ENCODE measurements at regions of chr14 and their contacts with region 1.

Region 1: GRCh38 chr14:24481622-24482324 is 26.3 kb downstream of the CMA1 start:
- DNase-seq: peak; percentile 70 to 89
- H3K4me3 ChIP-seq: no peak overlapping the region
- H3K27ac ChIP-seq: no peak overlapping the region
- H3K4me1 ChIP-seq: peaks cover 0 to 3% (median 0%) of the 10 kb centered on the region in 4 experiments; a peak in 1 of 7 replicates
- H3K27me3 ChIP-seq: no peaks in the 10 kb centered on the region
- CTCF ChIP-seq: peak; percentile 83 to 94 (median 88)
- EP300 ChIP-seq: no peak
- POLR2A ChIP-seq: peak in 1 of 2 experiments; percentile 33; a peak in 1 of 3 replicates
- RAD21 ChIP-seq: peak; percentile 82 to 90

Region 2: DNA sequence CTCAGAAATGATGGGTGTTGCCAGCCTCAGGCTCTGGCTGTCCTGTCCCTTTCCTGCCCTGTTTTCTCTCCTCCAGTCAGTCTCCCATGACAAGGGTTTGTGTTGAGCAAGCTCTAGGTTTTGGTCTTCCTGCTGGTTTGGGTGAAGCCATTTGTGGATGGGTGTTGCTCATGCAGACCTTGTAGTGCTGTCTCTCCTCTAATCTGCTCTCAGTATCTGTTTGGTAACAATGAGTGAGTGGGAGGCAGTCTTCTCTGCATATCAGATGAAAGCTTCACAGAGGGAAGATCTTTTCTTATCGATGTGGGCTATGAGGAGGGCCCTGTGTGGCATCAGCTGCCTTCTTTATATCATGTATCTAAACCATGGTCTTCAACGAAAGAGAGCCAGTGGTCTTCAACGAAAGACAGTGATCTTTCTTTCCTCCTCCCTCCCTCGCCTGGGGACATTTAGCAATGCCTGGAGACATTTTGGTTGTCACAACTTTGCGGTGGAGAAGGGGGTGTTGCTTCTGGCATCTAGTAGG is 22.7 kb after region 1 on chr14:
- CTCF ChIA-PET with region 1: interaction called, 10 read pairs
- POLR2A ChIA-PET with region 1: no interaction called
- DNase-seq: no peak
- H3K4me3 ChIP-seq: no peak overlapping the region
- H3K27ac ChIP-seq: no peak overlapping the region
- H3K4me1 ChIP-seq: no peaks in the 10 kb centered on the region
- H3K27me3 ChIP-seq: no peaks in the 10 kb centered on the region
- CTCF ChIP-seq: no peak
- EP300 ChIP-seq: no peak
- POLR2A ChIP-seq: no peak
- RAD21 ChIP-seq: no peak

Region 3: DNA sequence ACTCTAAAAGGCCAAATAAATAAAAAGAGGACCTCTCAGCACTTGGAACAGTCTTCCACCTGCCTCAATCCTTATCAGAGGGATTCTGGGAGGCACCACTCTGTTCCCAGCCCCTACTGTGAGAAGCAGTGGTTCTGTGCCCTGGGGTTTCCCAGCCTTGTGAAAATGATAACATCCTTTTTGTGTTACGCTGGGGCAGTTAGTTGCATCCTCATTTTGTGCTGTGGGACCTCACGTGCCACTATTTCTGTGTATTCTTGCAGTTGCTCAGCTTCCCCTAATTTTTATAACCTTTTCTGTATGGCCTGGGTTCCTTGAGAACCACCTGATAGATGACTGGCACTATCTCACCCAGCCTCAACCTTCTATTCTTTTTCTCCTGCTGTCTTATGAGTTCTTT is 37.1 kb after region 1 on chr14:
- CTCF ChIA-PET with region 1: no interaction called
- POLR2A ChIA-PET with region 1: no interaction called
- DNase-seq: no peak
- H3K4me3 ChIP-seq: no peak overlapping the region
- H3K27ac ChIP-seq: no peak overlapping the region
- H3K4me1 ChIP-seq: no peaks in the 10 kb centered on the region
- H3K27me3 ChIP-seq: 0 out of 7 replicates have a peak, but pooled peaks cover 0 to 2% (median 0%) of the 10 kb centered on the region in 4 experiments
- CTCF ChIP-seq: no peak
- EP300 ChIP-seq: no peak
- POLR2A ChIP-seq: no peak
- RAD21 ChIP-seq: no peak

Region 4: GRCh38 chr14:24690492-24690891 is 208.7 kb after region 1 on chr14:
- CTCF ChIA-PET with region 1: no interaction called
- POLR2A ChIA-PET with region 1: no interaction called
- DNase-seq: peak; percentile 33 to 61
- H3K4me3 ChIP-seq: no peak overlapping the region
- H3K27ac ChIP-seq: no peak overlapping the region
- H3K4me1 ChIP-seq: peaks cover 0 to 2% (median 0%) of the 10 kb centered on the region in 4 experiments; a peak in 2 of 7 replicates
- H3K27me3 ChIP-seq: no peaks in the 10 kb centered on the region
- CTCF ChIP-seq: peak in 2 of 3 experiments; percentile 49 to 55; a peak in 3 of 4 replicates
- EP300 ChIP-seq: no peak
- POLR2A ChIP-seq: no peak
- RAD21 ChIP-seq: peak; percentile 56 to 64